Calu3 (cell line): ENCODE measurements at regions of chr16 and their contacts with region 1.

Region 1: DNA sequence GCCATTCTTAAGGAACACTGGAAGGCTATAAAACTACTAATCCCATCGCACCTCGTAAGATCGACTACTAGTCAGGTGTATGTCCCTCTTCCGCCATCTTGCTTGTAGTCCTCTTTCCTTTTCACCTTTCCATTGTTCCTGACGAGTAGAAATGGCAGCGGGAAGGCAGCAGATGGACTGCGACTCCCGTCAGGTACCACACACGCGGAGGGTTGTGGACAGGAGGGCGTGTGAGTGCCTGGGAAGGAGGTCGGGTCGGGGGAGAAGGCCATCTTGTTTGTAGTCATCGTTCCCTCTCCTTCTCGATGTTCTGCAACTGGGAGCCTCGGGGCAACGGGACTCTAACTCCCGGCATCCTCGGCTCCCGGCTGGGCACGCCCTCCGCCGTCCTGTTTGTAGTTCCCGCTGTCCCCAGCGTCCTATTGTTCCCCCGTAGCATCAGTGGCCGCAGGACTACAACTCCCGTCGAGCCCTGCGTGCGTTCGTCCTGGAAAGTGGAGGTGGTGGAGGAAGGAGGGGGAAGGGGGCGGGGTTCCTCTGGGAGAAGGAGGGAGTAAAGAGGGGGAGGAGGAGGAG is 324 bp upstream of the FBXL19 start:
- DNase-seq: peak; percentile 99
- H3K4me3 Mint-ChIP-seq: peak overlapping the region; percentile 94
- H3K27ac Mint-ChIP-seq: peak overlapping the region; percentile 100
- H3K4me1 Mint-ChIP-seq: peaks cover 26% of the 10 kb centered on the region
- H3K27me3 Mint-ChIP-seq: no peaks in the 10 kb centered on the region
- CTCF ChIP-seq: no peak

Region 2: DNA sequence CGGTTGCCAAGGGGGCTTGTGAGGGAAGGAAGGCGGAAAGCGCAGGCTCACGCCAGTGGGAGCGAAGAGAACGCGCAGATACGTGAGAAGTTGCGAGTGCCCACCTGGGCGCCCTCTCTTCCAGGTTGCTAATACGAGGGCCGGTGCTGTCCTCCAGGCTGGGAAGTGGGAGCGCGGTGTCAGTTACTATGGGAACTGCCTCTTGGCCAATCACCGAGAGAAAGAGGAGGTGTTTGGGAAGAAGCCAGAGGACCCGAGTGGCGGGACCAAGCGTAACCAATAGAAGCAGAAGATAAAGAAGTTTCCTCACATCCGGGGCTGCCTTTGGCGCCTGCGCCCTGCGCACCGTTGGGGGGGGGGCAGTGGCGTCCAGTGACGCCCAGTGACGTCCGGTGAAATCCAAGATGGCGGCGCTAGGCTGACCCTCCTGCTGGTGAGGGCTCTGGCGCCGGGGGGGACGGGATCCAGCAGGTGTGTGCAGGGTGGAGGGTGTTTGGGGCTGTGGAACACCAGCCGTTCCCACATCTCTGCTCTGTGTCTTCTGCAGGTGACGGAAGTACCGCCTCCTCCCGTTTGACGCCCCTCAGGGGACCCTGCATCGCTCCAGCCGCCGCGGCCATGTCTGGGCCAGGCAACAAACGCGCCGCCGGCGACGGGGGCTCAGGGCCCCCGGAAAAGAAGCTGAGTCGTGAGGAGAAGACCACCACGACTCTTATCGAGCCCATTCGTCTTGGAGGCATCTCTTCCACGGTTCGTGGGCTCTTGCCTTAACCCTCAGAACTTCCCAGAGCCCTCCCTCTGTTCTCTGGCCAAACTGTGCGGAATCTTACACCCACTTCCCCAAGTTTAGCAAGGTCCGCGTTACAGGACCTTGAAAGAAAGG is 160.9 kb before region 1 on chr16 and contains the starts of genes CFAP119 and RNF40:
- CTCF ChIA-PET with region 1: no interaction called
- intact Hi-C with region 1: loop called (anchors 5 kb)
- DNase-seq: peak; percentile 98
- H3K4me3 Mint-ChIP-seq: peak within 1 kb of the TSS; percentile 96
- H3K27ac Mint-ChIP-seq: peak within 1 kb of the TSS; percentile 94
- H3K4me1 Mint-ChIP-seq: peaks cover 24% of the 10 kb centered on the region
- H3K27me3 Mint-ChIP-seq: no peaks in the 10 kb centered on the region
- CTCF ChIP-seq: no peak
- total RNA-seq, gene CFAP119: 13.7 and 13.8 TPM in 2 replicates
- total RNA-seq, gene RNF40: 130 and 136 TPM in 2 replicates

Region 3: GRCh38 chr16:30941600-30942425 is 18.8 kb after region 1 on chr16:
- CTCF ChIA-PET with region 1: interaction called, 12 read pairs
- intact Hi-C with region 1: no loop called
- DNase-seq: peak; percentile 88
- H3K4me3 Mint-ChIP-seq: no peak overlapping the region
- H3K27ac Mint-ChIP-seq: no peak overlapping the region
- H3K4me1 Mint-ChIP-seq: peaks cover 16% of the 10 kb centered on the region
- H3K27me3 Mint-ChIP-seq: no peaks in the 10 kb centered on the region
- CTCF ChIP-seq: peak; percentile 93

Region 4: DNA sequence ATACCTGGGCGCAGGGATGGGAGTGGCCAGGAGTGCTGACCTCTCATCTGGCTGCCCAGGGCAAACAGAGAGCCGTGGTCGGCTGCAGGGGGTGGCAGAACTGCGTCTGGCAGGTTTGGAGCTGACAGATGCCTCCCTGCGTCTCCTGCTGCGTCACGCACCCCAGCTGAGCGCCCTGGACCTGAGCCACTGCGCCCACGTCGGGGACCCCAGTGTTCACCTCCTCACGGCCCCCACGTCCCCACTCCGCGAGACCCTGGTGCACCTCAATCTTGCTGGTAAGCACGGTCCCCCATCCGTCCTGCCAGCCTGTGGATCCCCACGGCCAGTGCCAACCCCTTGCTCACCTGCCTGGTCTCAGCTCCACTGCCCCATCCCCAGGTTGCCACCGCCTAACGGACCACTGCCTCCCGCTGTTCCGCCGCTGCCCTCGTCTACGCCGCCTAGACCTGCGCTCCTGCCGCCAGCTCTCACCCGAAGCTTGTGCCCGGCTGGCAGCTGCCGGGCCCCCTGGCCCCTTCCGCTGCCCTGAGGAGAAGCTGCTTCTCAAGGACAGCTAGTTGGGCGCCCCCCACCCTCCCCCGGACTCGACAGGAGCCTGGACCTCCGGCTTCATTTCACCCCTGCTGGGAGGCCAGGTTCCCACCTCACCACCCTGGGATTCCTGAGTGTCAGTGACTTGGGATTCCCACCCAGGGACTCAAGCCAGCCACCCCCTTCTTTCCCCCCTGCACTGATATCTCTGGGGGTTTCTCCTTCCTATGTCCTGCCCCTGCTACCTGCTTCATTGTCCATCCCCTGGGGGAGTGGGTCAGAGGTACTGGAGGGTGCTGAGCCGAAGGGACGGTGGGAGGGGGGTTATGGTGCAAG is 23.9 kb after region 1 on chr16:
- CTCF ChIA-PET with region 1: interaction called, 12 read pairs
- intact Hi-C with region 1: no loop called
- DNase-seq: no peak
- H3K4me3 Mint-ChIP-seq: peak overlapping the region; percentile 3
- H3K27ac Mint-ChIP-seq: peak overlapping the region; percentile 31
- H3K4me1 Mint-ChIP-seq: peaks cover 26% of the 10 kb centered on the region
- H3K27me3 Mint-ChIP-seq: no peaks in the 10 kb centered on the region
- CTCF ChIP-seq: no peak